Right cardiac atrium (tissue), 5 donors: ENCODE measurements at regions of chr11 and their contacts with region 1.

Region 1: GRCh38 chr11:10243896-10244575 is 50.0 kb downstream of the SBF2 start:
- DNase-seq: no peak
- ATAC-seq: no peak
- H3K4me3 ChIP-seq: no peak overlapping the region
- H3K27ac ChIP-seq: no peak overlapping the region
- H3K4me1 ChIP-seq: peaks cover 2% of the 10 kb centered on the region
- H3K27me3 ChIP-seq: no peaks in the 10 kb centered on the region

Region 2: DNA sequence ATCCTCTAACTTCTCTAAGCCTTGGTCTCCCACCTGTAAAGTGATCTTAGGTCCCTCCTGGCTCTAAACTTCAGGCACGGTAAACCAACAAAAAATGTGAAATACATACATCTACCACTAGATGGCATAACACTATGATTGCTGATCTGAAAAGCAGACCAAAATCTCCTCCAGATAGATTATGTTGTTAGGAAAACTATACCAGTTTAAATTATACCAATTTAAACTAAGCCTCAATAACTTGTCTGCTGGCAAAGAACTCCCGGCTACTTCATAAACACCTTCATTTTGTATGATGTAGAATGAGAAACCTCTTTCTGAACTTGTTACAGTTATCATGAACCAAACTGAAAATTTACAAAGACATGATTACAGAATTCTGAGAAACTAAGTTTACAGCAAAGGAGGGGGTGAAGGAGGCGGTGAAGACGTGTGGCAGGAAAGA is 35.9 kb before region 1 on chr11:
- intact Hi-C with region 1: loop called in 1 of 4 experiments (anchors 2 kb)
- DNase-seq: no peak
- ATAC-seq: peak in 1 of 2 donors; percentile 53
- H3K4me3 ChIP-seq: no peak overlapping the region
- H3K27ac ChIP-seq: no peak overlapping the region
- H3K4me1 ChIP-seq: no peaks in the 10 kb centered on the region
- H3K27me3 ChIP-seq: no peaks in the 10 kb centered on the region

Region 3: GRCh38 chr11:10350341-10350740 is 106.3 kb after region 1 on chr11:
- intact Hi-C with region 1: no loop called
- DNase-seq: no peak
- ATAC-seq: no peak
- H3K4me3 ChIP-seq: no peak overlapping the region
- H3K27ac ChIP-seq: no peak overlapping the region
- H3K4me1 ChIP-seq: peaks cover 9% of the 10 kb centered on the region
- H3K27me3 ChIP-seq: no peaks in the 10 kb centered on the region